ENCODE measurements at regions of chr20 and their contacts with region 1.

Region 1: GRCh38 chr20:57654363-57654997 is 34.3 kb upstream of the ZBP1 start:
- DNase-seq: peak; percentile 71 to 79
- H3K4me3 ChIP-seq: no peak overlapping the region
- H3K4me3 Mint-ChIP-seq: no peak overlapping the region
- H3K27ac Mint-ChIP-seq: no peak overlapping the region
- H3K4me1 ChIP-seq: no peaks in the 10 kb centered on the region
- H3K4me1 Mint-ChIP-seq: no peaks in the 10 kb centered on the region
- H3K27me3 ChIP-seq: no peaks in the 10 kb centered on the region
- H3K27me3 Mint-ChIP-seq: peaks cover 3% of the 10 kb centered on the region
- CTCF ChIP-seq: peak; percentile 98 to 99

Region 2: GRCh38 chr20:57596998-57597939 is 57.2 kb before region 1 on chr20:
- CTCF ChIA-PET with region 1: interaction called, 12 read pairs
- POLR2A ChIA-PET with region 1: no interaction called
- intact Hi-C with region 1: loop called (anchors 1 kb)
- DNase-seq: peak; percentile 73 to 91
- H3K4me3 ChIP-seq: no peak overlapping the region
- H3K4me3 Mint-ChIP-seq: no peak overlapping the region
- H3K27ac Mint-ChIP-seq: no peak overlapping the region
- H3K4me1 ChIP-seq: peaks cover 7% of the 10 kb centered on the region; the same call in 1 of the 2 replicates
- H3K4me1 Mint-ChIP-seq: no peaks in the 10 kb centered on the region
- H3K27me3 ChIP-seq: no peaks in the 10 kb centered on the region
- H3K27me3 Mint-ChIP-seq: peaks cover 8% of the 10 kb centered on the region
- CTCF ChIP-seq: peak; percentile 99 to 100

Region 3: GRCh38 chr20:57693002-57693640 is 38.6 kb after region 1 on chr20:
- CTCF ChIA-PET with region 1: interaction called, 6 read pairs
- POLR2A ChIA-PET with region 1: no interaction called
- intact Hi-C with region 1: loop called (anchors 1 kb)
- DNase-seq: peak; percentile 97 to 98
- H3K4me3 ChIP-seq: no peak overlapping the region
- H3K4me3 Mint-ChIP-seq: peak overlapping the region; percentile 57
- H3K27ac Mint-ChIP-seq: peak overlapping the region; percentile 85
- H3K4me1 ChIP-seq: peaks cover 32% of the 10 kb centered on the region
- H3K4me1 Mint-ChIP-seq: peaks cover 36% of the 10 kb centered on the region
- H3K27me3 ChIP-seq: no peaks in the 10 kb centered on the region; the same call in 1 of the 2 replicates
- H3K27me3 Mint-ChIP-seq: no peaks in the 10 kb centered on the region
- CTCF ChIP-seq: peak; percentile 93 to 94

Region 4: DNA sequence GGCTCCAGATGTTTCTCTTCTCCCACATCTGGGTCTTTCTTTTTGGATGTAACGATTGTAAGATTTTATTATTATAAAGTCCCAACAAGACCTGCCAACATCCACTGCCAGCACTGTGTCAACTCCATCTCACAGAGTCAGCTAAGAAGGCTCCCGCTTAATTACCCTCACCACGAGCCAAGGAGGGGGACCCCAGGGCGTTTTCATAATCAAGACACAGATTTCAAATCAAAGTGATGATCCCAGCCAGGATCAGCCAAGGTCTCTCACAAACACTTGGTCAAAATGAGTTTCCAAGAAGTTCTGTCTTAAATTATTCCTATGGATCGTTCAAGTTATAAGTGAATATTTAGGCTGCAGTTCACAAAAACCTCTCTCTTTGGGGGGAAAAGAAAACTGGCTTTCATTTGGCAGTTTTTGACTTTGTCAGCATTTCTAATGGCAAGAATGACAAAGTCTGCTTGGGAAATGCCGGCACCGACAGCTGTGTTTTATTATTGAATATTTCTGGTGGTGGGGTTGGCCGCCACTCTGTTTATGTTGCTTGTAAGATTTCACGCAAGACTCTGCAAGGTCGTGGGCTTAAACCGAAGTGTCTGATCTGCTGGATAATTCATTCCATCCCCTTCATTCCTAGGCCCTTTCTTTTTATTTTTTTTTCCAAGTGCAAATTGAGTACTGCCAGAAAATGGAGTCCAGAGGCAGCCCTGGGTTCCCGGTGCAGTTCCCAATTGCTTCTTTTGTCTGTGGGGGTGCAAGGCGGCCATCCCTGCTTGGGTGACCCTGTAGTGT is 225.5 kb after region 1 on chr20:
- CTCF ChIA-PET with region 1: no interaction called
- POLR2A ChIA-PET with region 1: no interaction called
- intact Hi-C with region 1: loop called (anchors 10 kb)
- DNase-seq: peak in 1 of 2 experiments; percentile 5
- H3K4me3 ChIP-seq: no peak overlapping the region
- H3K4me3 Mint-ChIP-seq: no peak overlapping the region
- H3K27ac Mint-ChIP-seq: no peak overlapping the region
- H3K4me1 ChIP-seq: no peaks in the 10 kb centered on the region
- H3K4me1 Mint-ChIP-seq: no peaks in the 10 kb centered on the region
- H3K27me3 ChIP-seq: peaks cover 3% of the 10 kb centered on the region
- H3K27me3 Mint-ChIP-seq: peaks cover 39% of the 10 kb centered on the region
- CTCF ChIP-seq: no peak

Region 5: DNA sequence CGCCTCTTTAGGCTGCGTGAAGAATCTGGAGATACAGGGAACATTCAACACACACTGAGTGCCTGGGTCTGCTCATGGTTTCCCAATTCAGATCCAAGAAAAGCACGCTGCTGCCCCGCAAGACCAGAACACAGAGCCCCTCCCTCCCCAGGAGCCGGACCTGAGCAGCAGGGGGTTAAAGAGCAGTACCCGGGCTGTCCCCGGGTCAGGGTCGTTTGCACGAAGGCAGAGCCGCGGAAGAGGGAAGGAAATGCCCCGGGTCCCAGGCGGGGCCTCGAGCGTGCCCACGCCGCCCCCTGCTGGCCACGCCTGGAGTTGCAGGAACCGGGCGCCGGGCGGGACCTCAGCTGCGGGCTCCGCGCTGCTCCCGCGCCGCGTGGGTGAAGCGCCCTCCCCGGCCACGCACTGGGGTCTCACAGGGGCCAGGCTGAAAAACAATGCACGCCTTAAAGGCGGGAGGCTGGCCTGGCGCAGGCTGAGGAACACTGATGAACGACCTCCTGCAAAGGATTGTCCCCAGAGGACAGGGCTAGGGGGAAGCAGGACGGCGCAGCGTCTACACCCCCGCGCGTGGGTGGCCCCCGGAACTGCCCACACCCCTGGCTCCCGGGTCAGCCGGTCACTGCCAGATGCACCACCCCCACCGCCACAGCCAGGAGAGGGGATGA is 525.1 kb after region 1 on chr20:
- CTCF ChIA-PET with region 1: interaction called, 8 read pairs
- POLR2A ChIA-PET with region 1: no interaction called
- intact Hi-C with region 1: loop called (anchors 1 kb)
- DNase-seq: peak in 1 of 2 experiments; percentile 87
- H3K4me3 ChIP-seq: no peak overlapping the region
- H3K4me3 Mint-ChIP-seq: peak overlapping the region; percentile 55
- H3K27ac Mint-ChIP-seq: no peak overlapping the region
- H3K4me1 ChIP-seq: peaks cover 9% of the 10 kb centered on the region
- H3K4me1 Mint-ChIP-seq: no peaks in the 10 kb centered on the region
- H3K27me3 ChIP-seq: peaks cover 7% of the 10 kb centered on the region
- H3K27me3 Mint-ChIP-seq: peaks cover 11% of the 10 kb centered on the region
- CTCF ChIP-seq: peak; percentile 97 to 100